Mammary epithelial cell (primary cell): ENCODE measurements at regions of chr1 and their contacts with region 1.

Region 1: GRCh38 chr1:181936768-181937581 is 124.5 kb downstream of the ZNF648 start:
- DNase-seq: peak; percentile 63
- H3K4me3 ChIP-seq: no peak overlapping the region
- H3K27ac ChIP-seq: no peak overlapping the region
- H3K4me1 ChIP-seq: no peaks in the 10 kb centered on the region
- H3K27me3 ChIP-seq: peaks cover 2% of the 10 kb centered on the region
- CTCF ChIP-seq: peak; percentile 78 to 84

Region 2: GRCh38 chr1:181189691-181190363 is 747.1 kb before region 1 on chr1:
- CTCF ChIA-PET with region 1: no interaction called
- dilution Hi-C with region 1: no loop called
- in situ Hi-C with region 1: no loop called
- intact Hi-C with region 1: loop called (anchors 5 kb)
- DNase-seq: peak; percentile 44
- H3K4me3 ChIP-seq: peak overlapping the region in 2 of 3 experiments; percentile 6 to 14
- H3K27ac ChIP-seq: no peak overlapping the region
- H3K4me1 ChIP-seq: peaks cover 5% of the 10 kb centered on the region
- H3K27me3 ChIP-seq: no peaks in the 10 kb centered on the region
- CTCF ChIP-seq: peak; percentile 79 to 95

Region 3: DNA sequence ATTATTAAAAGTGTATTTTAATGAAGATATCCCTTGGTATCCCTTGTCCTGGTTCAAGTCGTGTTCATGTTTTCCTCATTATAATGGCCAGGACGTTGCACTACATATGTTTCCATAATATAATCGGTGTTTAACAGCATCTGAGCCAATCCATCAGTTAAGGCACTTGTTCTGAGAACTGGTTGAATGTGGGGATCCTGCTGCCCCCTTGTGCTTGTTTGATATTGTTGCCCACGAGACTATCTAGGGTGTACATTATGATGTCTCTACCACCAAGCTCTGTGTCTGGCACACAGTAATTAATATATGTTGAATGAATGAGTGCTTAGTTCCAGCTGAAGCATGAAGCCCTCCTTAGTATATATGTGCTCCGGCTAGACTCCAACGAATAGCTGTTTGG is 260.7 kb before region 1 on chr1:
- CTCF ChIA-PET with region 1: no interaction called
- dilution Hi-C with region 1: no loop called
- in situ Hi-C with region 1: no loop called
- intact Hi-C with region 1: loop called (anchors 1 kb)
- DNase-seq: peak; percentile 26
- H3K4me3 ChIP-seq: no peak overlapping the region
- H3K27ac ChIP-seq: no peak overlapping the region
- H3K4me1 ChIP-seq: no peaks in the 10 kb centered on the region
- H3K27me3 ChIP-seq: no peaks in the 10 kb centered on the region
- CTCF ChIP-seq: peak; percentile 42 to 62

Region 4: DNA sequence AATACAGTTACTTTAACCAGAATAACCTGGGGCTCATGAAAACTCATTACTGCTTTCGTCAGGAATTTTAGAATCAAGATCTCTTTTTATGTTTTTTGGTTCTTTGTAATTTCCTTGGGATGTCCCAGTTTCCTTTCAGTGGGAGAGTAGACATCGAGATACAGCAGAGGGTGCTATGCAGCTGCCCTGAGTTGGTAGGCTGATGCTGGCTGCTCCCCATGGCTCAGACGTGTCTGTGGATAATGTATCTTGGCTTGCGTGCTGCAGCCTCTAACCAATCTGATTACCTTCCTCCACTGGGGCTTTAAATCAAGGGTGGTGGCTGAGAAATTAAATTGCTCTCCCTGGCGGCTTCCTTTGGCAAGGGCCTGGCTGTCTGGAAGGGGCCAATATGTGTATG is 199.9 kb before region 1 on chr1:
- CTCF ChIA-PET with region 1: no interaction called
- dilution Hi-C with region 1: no loop called
- in situ Hi-C with region 1: loop called in 1 of 2 experiments (anchors 10 kb)
- intact Hi-C with region 1: loop called (anchors 1 kb)
- DNase-seq: peak; percentile 19
- H3K4me3 ChIP-seq: no peak overlapping the region
- H3K27ac ChIP-seq: no peak overlapping the region
- H3K4me1 ChIP-seq: no peaks in the 10 kb centered on the region
- H3K27me3 ChIP-seq: no peaks in the 10 kb centered on the region
- CTCF ChIP-seq: peak in 1 of 2 donors; percentile 64

Region 5: DNA sequence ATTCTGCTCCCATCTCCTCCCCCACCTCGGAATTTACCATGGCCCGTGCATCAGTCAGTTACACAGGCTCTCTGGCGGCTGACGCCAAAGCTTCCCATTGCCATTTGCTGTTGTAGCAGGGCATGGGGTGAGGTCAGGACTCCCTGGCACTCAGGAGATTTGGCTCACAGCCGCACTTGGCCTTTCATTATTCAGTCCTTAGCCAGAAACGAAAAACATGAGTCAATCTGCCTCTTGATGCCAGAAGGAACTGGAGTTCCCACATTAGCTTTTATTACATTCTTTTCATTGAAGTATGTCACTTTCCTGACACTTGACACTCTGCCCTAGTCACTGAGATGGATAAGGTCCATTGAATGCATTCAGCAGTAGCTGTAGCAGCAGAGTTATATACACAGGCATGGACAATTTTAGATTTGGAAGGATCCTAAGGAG is 193.1 kb before region 1 on chr1:
- CTCF ChIA-PET with region 1: interaction called, 10 read pairs
- dilution Hi-C with region 1: no loop called
- in situ Hi-C with region 1: loop called in 1 of 2 experiments (anchors 10 kb)
- intact Hi-C with region 1: no loop called
- DNase-seq: no peak
- H3K4me3 ChIP-seq: no peak overlapping the region
- H3K27ac ChIP-seq: no peak overlapping the region
- H3K4me1 ChIP-seq: no peaks in the 10 kb centered on the region
- H3K27me3 ChIP-seq: no peaks in the 10 kb centered on the region
- CTCF ChIP-seq: no peak

Region 6: GRCh38 chr1:182054698-182055326 is 117.8 kb after region 1 on chr1:
- CTCF ChIA-PET with region 1: no interaction called
- dilution Hi-C with region 1: no loop called
- in situ Hi-C with region 1: no loop called
- intact Hi-C with region 1: loop called (anchors 2 kb)
- DNase-seq: peak; percentile 38
- H3K4me3 ChIP-seq: no peak overlapping the region
- H3K27ac ChIP-seq: no peak overlapping the region
- H3K4me1 ChIP-seq: no peaks in the 10 kb centered on the region
- H3K27me3 ChIP-seq: no peaks in the 10 kb centered on the region
- CTCF ChIP-seq: peak; percentile 60